Caco-2 (cell line): ENCODE measurements at regions of chr16 and their contacts with region 1.

Region 1: DNA sequence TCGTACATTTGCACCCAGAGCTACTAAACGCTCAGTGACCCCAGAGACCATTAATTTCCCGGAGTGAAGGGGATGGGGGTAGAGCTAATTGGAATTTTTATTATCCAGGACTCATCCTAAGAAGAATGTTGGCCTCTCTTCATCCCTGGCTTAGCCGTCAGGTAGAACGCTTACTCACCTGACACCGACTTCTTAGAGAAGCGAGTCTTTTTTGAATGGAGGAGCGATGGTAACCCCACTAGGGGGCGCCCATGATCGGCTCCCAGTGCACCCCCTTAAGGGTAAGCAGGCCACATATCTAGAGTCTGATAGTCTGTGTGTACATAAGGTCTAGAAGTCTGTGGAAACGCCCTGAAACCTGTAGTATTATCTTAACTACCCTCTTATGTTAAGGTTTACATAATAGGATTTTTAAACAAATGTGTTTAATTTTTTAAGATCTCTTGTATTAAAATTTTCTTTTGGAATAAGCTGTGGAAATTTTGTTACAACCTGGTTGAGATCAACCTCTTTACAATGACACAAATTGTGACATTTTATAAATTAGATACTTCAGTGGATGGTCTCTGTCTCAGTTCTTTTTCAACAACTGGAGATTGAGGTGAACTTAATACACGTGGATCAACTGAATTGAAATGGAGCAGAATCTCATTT is 229.8 kb downstream of the CPPED1 start:
- DNase-seq: peak; percentile 67 to 75
- H3K4me3 ChIP-seq: no peak overlapping the region
- H3K4me3 Mint-ChIP-seq: no peak overlapping the region
- H3K27ac Mint-ChIP-seq: no peak overlapping the region
- H3K4me1 ChIP-seq: peaks cover 4% of the 10 kb centered on the region; the same call in 1 of the 2 replicates
- H3K4me1 Mint-ChIP-seq: no peaks in the 10 kb centered on the region
- H3K27me3 ChIP-seq: no peaks in the 10 kb centered on the region
- H3K27me3 Mint-ChIP-seq: no peaks in the 10 kb centered on the region
- CTCF ChIP-seq: peak; percentile 77 to 79

Region 2: GRCh38 chr16:12455287-12455798 is 118.5 kb before region 1 on chr16:
- CTCF ChIA-PET with region 1: no interaction called
- POLR2A ChIA-PET with region 1: no interaction called
- intact Hi-C with region 1: loop called (anchors 5 kb)
- DNase-seq: peak; percentile 57 to 73
- H3K4me3 ChIP-seq: no peak overlapping the region
- H3K4me3 Mint-ChIP-seq: no peak overlapping the region
- H3K27ac Mint-ChIP-seq: no peak overlapping the region
- H3K4me1 ChIP-seq: no peaks in the 10 kb centered on the region
- H3K4me1 Mint-ChIP-seq: no peaks in the 10 kb centered on the region
- H3K27me3 ChIP-seq: no peaks in the 10 kb centered on the region
- H3K27me3 Mint-ChIP-seq: peaks cover 2% of the 10 kb centered on the region
- CTCF ChIP-seq: peak; percentile 84 to 87

Region 3: DNA sequence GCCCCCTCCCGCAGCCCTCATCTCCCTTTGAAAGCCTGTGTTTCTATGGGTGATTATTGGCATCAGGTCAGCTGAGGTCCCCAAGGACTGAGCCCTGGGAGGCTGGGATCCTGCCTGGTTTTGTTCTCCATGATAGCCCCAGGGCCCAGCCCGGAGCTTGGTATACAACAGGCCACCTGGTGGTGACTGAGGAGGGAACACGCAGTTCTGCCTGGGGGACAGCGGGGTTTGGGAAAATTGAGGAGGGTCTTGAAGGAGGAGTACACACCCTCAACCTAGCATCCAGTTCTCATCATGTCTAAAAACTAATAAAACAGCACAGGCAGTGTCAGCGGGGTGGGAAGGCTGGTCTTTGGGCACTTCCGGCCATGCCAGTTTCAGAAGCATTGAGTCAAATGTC is 105.3 kb before region 1 on chr16:
- CTCF ChIA-PET with region 1: no interaction called
- POLR2A ChIA-PET with region 1: no interaction called
- intact Hi-C with region 1: no loop called
- DNase-seq: peak in 1 of 2 experiments; percentile 14
- H3K4me3 ChIP-seq: no peak overlapping the region
- H3K4me3 Mint-ChIP-seq: no peak overlapping the region
- H3K27ac Mint-ChIP-seq: no peak overlapping the region
- H3K4me1 ChIP-seq: no peaks in the 10 kb centered on the region
- H3K4me1 Mint-ChIP-seq: no peaks in the 10 kb centered on the region
- H3K27me3 ChIP-seq: no peaks in the 10 kb centered on the region
- H3K27me3 Mint-ChIP-seq: no peaks in the 10 kb centered on the region
- CTCF ChIP-seq: peak; percentile 4 to 28

Region 4: DNA sequence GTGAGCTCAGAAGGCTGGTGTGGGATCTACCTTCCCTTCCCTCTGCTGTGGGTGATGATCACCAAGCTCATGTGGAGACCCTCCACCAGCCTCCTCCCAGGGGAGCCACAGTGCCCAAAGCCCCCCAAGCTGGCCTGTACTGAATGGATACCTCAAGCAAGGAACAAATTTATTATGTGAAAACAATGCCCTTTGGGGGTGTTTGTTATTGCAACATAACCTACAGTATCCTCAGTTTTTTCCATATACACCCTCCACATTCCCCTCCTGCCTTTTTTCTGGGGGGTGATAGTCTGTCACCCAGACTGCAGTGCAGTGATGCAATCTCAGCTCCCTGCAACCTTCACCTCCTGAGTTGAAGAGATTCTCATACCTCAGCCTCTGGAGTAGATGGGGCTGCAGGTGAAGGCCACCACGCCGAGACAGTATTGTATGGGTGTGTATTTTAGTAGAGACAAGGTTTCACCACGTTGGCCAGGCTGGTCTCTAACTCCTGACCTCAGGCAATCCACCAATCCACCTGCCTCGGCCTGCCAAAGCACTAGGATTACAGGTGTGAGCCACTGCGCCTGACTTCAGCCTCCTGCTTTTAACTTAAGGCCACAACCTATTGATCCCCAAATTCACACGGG is 13.9 kb after region 1 on chr16:
- CTCF ChIA-PET with region 1: no interaction called
- POLR2A ChIA-PET with region 1: no interaction called
- intact Hi-C with region 1: no loop called
- DNase-seq: no peak
- H3K4me3 ChIP-seq: no peak overlapping the region
- H3K4me3 Mint-ChIP-seq: no peak overlapping the region
- H3K27ac Mint-ChIP-seq: no peak overlapping the region
- H3K4me1 ChIP-seq: no peaks in the 10 kb centered on the region
- H3K4me1 Mint-ChIP-seq: peaks cover 13% of the 10 kb centered on the region
- H3K27me3 ChIP-seq: no peaks in the 10 kb centered on the region
- H3K27me3 Mint-ChIP-seq: no peaks in the 10 kb centered on the region
- CTCF ChIP-seq: no peak

Region 5: GRCh38 chr16:12613131-12613991 is 39.5 kb after region 1 on chr16:
- CTCF ChIA-PET with region 1: no interaction called
- POLR2A ChIA-PET with region 1: no interaction called
- intact Hi-C with region 1: loop called (anchors 1 kb)
- DNase-seq: peak; percentile 83 to 89
- H3K4me3 ChIP-seq: no peak overlapping the region
- H3K4me3 Mint-ChIP-seq: peak overlapping the region; percentile 69
- H3K27ac Mint-ChIP-seq: peak overlapping the region; percentile 94
- H3K4me1 ChIP-seq: peaks cover 51% of the 10 kb centered on the region
- H3K4me1 Mint-ChIP-seq: peaks cover 14% of the 10 kb centered on the region
- H3K27me3 ChIP-seq: no peaks in the 10 kb centered on the region
- H3K27me3 Mint-ChIP-seq: no peaks in the 10 kb centered on the region
- CTCF ChIP-seq: no peak

Region 6: DNA sequence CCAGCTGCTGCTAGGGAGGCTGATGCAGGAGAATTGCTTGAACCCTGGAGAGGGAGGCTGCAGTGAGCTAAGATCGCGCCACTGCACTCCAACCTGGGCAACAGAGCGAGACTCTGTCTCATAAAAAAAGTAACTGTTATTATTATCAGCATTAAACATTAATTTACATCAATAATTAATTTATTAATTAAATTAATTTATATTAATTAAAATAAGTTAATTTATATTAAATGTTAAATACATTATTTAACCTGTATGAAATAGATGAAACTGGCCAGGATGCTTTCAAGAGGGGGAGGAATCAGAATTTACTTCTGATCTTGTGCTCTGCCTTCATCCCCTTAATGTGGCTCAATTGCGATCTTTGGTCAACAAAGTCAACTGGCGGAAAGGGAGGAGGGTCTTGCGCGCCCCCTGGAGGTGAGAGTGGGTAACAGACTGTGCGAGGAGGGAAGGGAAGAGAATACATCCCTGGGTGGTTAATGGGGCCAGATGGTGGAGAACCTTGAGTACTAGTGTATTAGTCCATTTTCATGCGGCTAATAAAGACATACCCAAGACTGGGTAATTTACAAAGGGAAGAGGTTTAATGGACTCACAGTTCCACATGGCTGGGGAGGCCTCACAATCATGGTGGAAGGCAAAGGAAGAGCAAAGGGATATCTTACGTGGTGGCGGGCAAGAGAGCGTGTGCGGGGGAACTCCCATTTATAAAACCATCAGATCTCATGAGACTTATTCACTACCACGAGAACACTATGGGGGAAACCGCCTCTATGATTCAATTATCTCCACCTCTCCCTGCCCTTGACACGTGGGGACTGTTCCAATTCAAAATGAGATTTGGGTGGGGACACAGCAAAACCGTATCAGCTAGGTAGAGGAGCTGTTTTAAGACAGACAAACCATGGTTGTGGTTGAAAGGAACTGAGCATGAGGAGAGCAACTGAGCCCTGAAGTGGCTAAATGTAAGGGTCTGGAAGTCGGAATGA is 245.6 kb after region 1 on chr16:
- CTCF ChIA-PET with region 1: interaction called, 4 read pairs
- POLR2A ChIA-PET with region 1: no interaction called
- intact Hi-C with region 1: loop called (anchors 5 kb)
- DNase-seq: peak; percentile 64 to 75
- H3K4me3 ChIP-seq: no peak overlapping the region
- H3K4me3 Mint-ChIP-seq: no peak overlapping the region
- H3K27ac Mint-ChIP-seq: no peak overlapping the region
- H3K4me1 ChIP-seq: no peaks in the 10 kb centered on the region
- H3K4me1 Mint-ChIP-seq: no peaks in the 10 kb centered on the region
- H3K27me3 ChIP-seq: no peaks in the 10 kb centered on the region
- H3K27me3 Mint-ChIP-seq: peaks cover 4% of the 10 kb centered on the region
- CTCF ChIP-seq: peak; percentile 63 to 65